ENCODE measurements at regions of chr2 and their contacts with region 1.

Region 1: GRCh38 chr2:231394211-231395141 is 1.0 kb upstream of the B3GNT7 start:
- DNase-seq: no peak
- H3K4me3 ChIP-seq: no peak overlapping the region
- H3K27ac ChIP-seq: no peak overlapping the region
- H3K4me1 ChIP-seq: peaks cover 12% of the 10 kb centered on the region
- H3K27me3 ChIP-seq: peaks cover 4% of the 10 kb centered on the region
- CTCF ChIP-seq: no peak
- POLR2A ChIP-seq: no peak

Region 2: DNA sequence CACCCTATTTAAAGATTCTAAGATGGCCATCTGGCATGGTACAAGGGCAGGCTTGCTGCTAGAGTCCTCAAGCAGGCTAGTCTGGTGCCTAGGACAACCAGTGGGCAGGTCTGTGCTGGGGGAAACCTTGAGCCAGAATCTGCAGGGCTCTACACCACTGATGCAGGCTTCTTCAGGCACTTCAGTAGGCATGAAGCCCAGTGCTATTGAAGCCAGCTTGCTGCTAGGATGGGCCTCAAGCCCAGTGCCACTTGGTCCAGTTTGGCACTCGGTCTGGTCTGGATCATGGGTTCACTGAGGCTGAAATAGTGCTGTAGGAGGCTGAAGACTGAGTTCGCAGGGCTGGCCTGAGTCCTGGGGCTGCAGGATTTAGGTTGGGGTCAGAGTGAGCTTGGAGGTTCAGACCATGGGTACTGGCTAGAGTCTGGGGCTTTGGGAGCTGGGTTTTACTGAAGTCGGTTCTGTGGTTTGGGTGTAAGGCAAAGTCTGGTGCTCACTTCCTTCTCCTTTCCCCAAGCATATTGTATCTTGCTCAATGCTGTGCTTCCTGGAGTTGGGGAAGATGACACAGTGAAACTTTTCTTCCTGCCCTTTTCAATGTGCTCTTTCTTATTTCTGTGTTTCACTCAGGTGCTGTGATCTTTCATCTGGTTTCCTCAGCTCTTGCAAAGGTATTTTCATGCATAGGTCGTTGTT is 937.3 kb before region 1 on chr2:
- intact Hi-C with region 1: no loop called
- DNase-seq: no peak
- H3K4me3 ChIP-seq: no peak overlapping the region
- H3K27ac ChIP-seq: no peak overlapping the region
- H3K4me1 ChIP-seq: no peaks in the 10 kb centered on the region
- H3K27me3 ChIP-seq: no peaks in the 10 kb centered on the region
- CTCF ChIP-seq: no peak
- POLR2A ChIP-seq: no peak

Region 3: GRCh38 chr2:231227309-231228162 is 166.9 kb before region 1 on chr2:
- intact Hi-C with region 1: loop called (anchors 10 kb)
- DNase-seq: no peak
- H3K4me3 ChIP-seq: no peak overlapping the region
- H3K27ac ChIP-seq: no peak overlapping the region
- H3K4me1 ChIP-seq: peaks cover 7% of the 10 kb centered on the region
- H3K27me3 ChIP-seq: no peaks in the 10 kb centered on the region
- CTCF ChIP-seq: peak; percentile 13 to 76 (median 63)
- POLR2A ChIP-seq: no peak